H1 (cell line): ENCODE measurements at regions of chrX and their contacts with region 1.

Region 1: GRCh38 chrX:25427873-25428555 is 412.2 kb upstream of the ARX start:
- DNase-seq: peak in 1 of 2 experiments; percentile 66
- H3K4me3 ChIP-seq: no peak overlapping the region
- H3K27ac ChIP-seq: no peak overlapping the region
- H3K4me1 ChIP-seq: no peaks in the 10 kb centered on the region
- H3K27me3 ChIP-seq: no peaks in the 10 kb centered on the region
- CTCF ChIP-seq: peak; percentile 51 to 63 (median 58)
- EP300 ChIP-seq: no peak
- POLR2A ChIP-seq: no peak
- RAD21 ChIP-seq: peak; percentile 27 to 50

Region 2: GRCh38 chrX:25344161-25344936 is 83.7 kb before region 1 on chrX:
- CTCF ChIA-PET with region 1: interaction called, 11 read pairs
- POLR2A ChIA-PET with region 1: no interaction called
- DNase-seq: no peak
- H3K4me3 ChIP-seq: no peak overlapping the region
- H3K27ac ChIP-seq: no peak overlapping the region
- H3K4me1 ChIP-seq: no peaks in the 10 kb centered on the region
- H3K27me3 ChIP-seq: no peaks in the 10 kb centered on the region
- CTCF ChIP-seq: no peak
- EP300 ChIP-seq: no peak
- POLR2A ChIP-seq: no peak
- RAD21 ChIP-seq: no peak

Region 3: GRCh38 chrX:25389266-25389665 is 38.7 kb before region 1 on chrX:
- CTCF ChIA-PET with region 1: no interaction called
- POLR2A ChIA-PET with region 1: no interaction called
- DNase-seq: no peak
- H3K4me3 ChIP-seq: no peak overlapping the region
- H3K27ac ChIP-seq: no peak overlapping the region
- H3K4me1 ChIP-seq: no peaks in the 10 kb centered on the region
- H3K27me3 ChIP-seq: no peaks in the 10 kb centered on the region
- CTCF ChIP-seq: no peak
- EP300 ChIP-seq: no peak
- POLR2A ChIP-seq: no peak
- RAD21 ChIP-seq: no peak

Region 4: DNA sequence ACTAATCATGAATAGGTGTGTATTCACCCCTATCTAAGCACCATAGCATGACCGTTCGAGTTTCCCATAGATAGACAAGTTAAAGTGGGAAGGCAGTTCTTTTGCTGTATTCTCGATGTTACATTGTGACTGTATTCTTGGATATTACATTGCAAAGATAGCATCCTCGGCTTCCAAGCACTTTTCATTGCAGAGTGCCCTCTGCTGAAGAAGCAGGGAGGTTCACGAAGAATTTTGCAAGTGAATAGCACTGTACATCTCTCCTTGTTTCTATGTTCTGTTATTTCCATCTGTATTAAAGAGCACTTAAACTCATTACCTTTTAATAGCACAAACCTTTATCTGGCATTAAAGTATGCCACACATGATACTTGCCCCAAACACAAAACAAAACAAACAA is 14.5 kb after region 1 on chrX:
- CTCF ChIA-PET with region 1: interaction called, 11 read pairs
- POLR2A ChIA-PET with region 1: no interaction called
- DNase-seq: no peak
- H3K4me3 ChIP-seq: no peak overlapping the region
- H3K27ac ChIP-seq: no peak overlapping the region
- H3K4me1 ChIP-seq: no peaks in the 10 kb centered on the region
- H3K27me3 ChIP-seq: no peaks in the 10 kb centered on the region
- CTCF ChIP-seq: peak in 2 of 3 experiments; percentile 21 to 31; a peak in 2 of 4 replicates
- EP300 ChIP-seq: no peak
- POLR2A ChIP-seq: no peak
- RAD21 ChIP-seq: peak; percentile 41 to 44